Activated CD4-positive, alpha-beta T cell treated with anti-CD3 and anti-CD28 coated beads, Interleukin-2, amount 10 ng/mL, durations not matched to agents 24 days and 14 days (primary cell): ENCODE measurements at regions of chr11 and their contacts with region 1.

Region 1: GRCh38 chr11:8006349-8006977 is 19.3 kb downstream of the EIF3F start:
- DNase-seq: peak; percentile 81
- H3K4me3 Mint-ChIP-seq: no peak overlapping the region
- H3K27ac Mint-ChIP-seq: no peak overlapping the region
- H3K4me1 Mint-ChIP-seq: no peaks in the 10 kb centered on the region
- H3K27me3 Mint-ChIP-seq: peaks cover 2% of the 10 kb centered on the region

Region 2: DNA sequence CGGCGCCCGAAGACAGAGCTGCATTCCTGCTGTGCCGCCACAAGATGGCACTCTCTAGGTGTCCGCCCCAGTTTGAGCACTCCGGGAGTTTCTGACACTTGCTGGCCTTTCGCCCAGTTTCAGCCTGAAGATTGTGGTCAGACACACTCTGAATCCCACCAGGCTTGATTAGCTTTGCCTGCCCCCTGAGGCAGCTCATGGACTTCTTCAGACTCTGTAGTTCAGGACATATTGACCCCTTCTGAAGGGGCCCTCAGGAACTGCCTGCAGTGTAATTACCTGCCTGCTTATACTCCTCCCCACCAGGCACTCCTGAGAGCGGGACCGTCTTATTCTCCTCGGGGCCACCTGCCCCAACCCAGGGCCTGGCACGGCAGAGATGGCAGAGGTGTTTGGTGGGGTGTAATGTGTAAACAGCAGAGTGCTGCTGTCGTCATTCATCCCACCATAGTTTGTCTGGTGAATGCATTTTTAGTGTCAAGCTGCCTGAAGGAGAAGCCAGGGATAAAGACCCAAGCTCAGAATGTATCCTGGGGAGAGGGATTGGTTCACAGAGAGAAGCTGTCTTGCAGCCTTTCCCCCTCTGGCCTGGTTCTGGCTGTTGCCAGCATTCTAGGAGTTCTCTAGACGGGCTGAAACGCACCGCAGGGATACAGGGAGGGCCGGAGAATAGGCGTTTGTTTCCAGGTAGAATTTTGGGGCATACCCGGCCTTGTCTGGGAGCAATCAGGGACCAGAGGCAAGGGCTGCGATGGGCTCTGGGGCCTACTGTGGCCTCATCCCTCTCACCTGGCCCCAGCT is 27.0 kb after region 1 on chr11:
- intact Hi-C with region 1: loop called (anchors 2 kb)
- DNase-seq: peak; percentile 83
- H3K4me3 Mint-ChIP-seq: no peak overlapping the region
- H3K27ac Mint-ChIP-seq: no peak overlapping the region
- H3K4me1 Mint-ChIP-seq: peaks cover 4% of the 10 kb centered on the region
- H3K27me3 Mint-ChIP-seq: peaks cover 8% of the 10 kb centered on the region

Region 3: GRCh38 chr11:8092587-8093424 is 86.3 kb after region 1 on chr11:
- intact Hi-C with region 1: loop called (anchors 1 kb)
- DNase-seq: peak; percentile 76
- H3K4me3 Mint-ChIP-seq: no peak overlapping the region
- H3K27ac Mint-ChIP-seq: no peak overlapping the region
- H3K4me1 Mint-ChIP-seq: peaks cover 3% of the 10 kb centered on the region
- H3K27me3 Mint-ChIP-seq: no peaks in the 10 kb centered on the region

Region 4: DNA sequence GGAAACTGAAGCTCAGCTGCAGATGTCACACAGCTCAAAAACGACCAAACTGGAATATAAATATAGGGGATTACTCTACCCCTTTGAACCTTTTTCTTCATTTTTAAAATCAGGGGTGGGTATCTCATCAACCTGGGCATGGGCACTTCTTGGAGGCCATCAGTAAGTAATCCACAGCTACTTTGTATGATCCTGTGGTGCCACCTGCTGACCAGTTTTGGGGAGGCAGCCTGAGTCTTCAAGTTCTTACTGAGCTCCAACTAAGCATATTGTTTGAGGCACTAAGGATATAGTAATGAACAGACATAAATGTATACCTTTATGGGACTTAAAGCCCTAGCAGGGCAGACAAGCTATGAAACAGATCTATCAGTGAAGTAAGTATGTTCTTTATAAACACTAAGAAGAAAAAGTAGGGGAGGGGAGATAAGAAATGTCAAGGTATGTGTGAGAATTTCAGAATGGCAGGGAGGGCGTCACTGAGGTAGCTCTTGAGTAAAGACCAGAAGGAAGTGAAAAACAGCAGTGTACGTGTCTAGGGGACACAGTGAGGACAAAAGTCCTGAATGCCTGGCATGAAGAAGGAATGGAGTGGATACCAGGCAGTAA is 92.9 kb after region 1 on chr11:
- intact Hi-C with region 1: loop called (anchors 1 kb)
- DNase-seq: peak; percentile 91
- H3K4me3 Mint-ChIP-seq: no peak overlapping the region
- H3K27ac Mint-ChIP-seq: no peak overlapping the region
- H3K4me1 Mint-ChIP-seq: no peaks in the 10 kb centered on the region
- H3K27me3 Mint-ChIP-seq: no peaks in the 10 kb centered on the region

Region 5: GRCh38 chr11:8263769-8264410 is 257.4 kb after region 1 on chr11 and contains the start of gene LMO1:
- intact Hi-C with region 1: loop called (anchors 10 kb)
- DNase-seq: peak; percentile 92
- H3K4me3 Mint-ChIP-seq: peak within 1 kb of the TSS; percentile 67
- H3K27ac Mint-ChIP-seq: no peak within 1 kb of the TSS
- H3K4me1 Mint-ChIP-seq: peaks cover 8% of the 10 kb centered on the region
- H3K27me3 Mint-ChIP-seq: peaks cover 72% of the 10 kb centered on the region
- total RNA-seq, gene LMO1: not detected in 2 replicates